ENCODE measurements at regions of chr11 and their contacts with region 1.

Region 1: DNA sequence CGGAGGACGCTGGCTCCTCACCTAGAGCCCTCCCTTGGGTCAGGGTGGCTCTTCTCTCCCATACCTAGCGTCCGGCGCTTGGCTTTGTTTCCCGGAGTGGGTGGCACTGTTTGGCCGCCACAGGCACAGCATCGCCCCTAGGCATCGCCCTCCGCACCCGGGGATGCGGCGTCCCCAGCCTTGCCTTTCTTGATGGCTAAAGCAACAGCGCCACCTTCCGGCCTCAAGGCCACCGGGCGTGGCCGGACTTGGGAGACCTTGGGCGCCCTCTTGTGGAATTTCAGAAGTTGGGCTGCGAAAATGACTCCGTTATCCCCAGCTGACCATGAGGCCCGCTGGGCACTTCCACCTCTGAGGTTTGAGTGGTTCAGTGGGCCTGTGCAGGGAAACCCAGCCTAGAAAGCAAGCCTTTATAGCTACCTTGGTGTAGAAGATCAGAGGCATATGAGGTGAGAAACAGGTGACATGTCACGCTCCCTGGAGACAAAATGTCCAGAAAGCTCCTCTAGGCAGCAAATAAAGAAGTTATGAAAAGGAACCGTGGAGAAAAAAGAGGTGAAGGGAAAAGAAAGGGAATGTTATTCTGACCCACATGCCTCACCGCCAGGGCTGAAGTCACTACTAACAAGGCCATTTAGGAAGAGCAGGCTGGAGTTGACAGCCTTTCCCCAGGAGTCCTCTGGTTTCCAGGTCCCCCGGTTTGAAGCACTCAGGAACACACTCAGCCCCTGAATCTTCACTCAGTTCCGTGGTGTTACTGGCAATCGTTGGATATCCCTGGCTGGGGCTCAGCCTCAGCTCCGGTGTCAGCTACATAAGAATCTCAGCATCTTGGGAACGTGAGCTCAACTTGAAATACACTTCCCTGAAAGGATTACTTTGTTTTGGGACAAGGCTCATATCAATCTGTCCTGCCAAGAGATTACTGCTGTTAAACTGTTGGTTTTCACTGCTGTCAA is 54.1 kb downstream of the SNX19 start:
- DNase-seq: no peak
- ATAC-seq: peak; percentile 96
- H3K4me3 ChIP-seq: no peak overlapping the region
- H3K27ac ChIP-seq: no peak overlapping the region
- H3K4me1 ChIP-seq: no peaks in the 10 kb centered on the region
- H3K27me3 ChIP-seq: no peaks in the 10 kb centered on the region
- CTCF ChIP-seq: peak; percentile 99 to 100 (median 100); a peak in 5 of 6 replicates
- EP300 ChIP-seq: no peak
- POLR2A ChIP-seq: no peak
- RAD21 ChIP-seq: peak; percentile 100

Region 2: GRCh38 chr11:130434521-130435223 is 427.5 kb before region 1 on chr11:
- CTCF ChIA-PET with region 1: interaction called, 295 read pairs
- POLR2A ChIA-PET with region 1: no interaction called
- RAD21 ChIA-PET with region 1: interaction called, 132 read pairs
- SMC1A ChIA-PET with region 1: interaction called, 177 read pairs
- in situ Hi-C with region 1: loop called (anchors 10 kb)
- intact Hi-C with region 1: loop called (anchors 1 kb)
- DNase-seq: peak; percentile 44
- ATAC-seq: peak; percentile 94
- H3K4me3 ChIP-seq: peak overlapping the region; percentile 71
- H3K27ac ChIP-seq: no peak overlapping the region
- H3K4me1 ChIP-seq: no peaks in the 10 kb centered on the region
- H3K27me3 ChIP-seq: peaks cover 3 to 8% of the 10 kb centered on the region in 2 experiments
- CTCF ChIP-seq: peak; percentile 80 to 91 (median 90)
- EP300 ChIP-seq: no peak
- POLR2A ChIP-seq: no peak
- RAD21 ChIP-seq: peak; percentile 75

Region 3: DNA sequence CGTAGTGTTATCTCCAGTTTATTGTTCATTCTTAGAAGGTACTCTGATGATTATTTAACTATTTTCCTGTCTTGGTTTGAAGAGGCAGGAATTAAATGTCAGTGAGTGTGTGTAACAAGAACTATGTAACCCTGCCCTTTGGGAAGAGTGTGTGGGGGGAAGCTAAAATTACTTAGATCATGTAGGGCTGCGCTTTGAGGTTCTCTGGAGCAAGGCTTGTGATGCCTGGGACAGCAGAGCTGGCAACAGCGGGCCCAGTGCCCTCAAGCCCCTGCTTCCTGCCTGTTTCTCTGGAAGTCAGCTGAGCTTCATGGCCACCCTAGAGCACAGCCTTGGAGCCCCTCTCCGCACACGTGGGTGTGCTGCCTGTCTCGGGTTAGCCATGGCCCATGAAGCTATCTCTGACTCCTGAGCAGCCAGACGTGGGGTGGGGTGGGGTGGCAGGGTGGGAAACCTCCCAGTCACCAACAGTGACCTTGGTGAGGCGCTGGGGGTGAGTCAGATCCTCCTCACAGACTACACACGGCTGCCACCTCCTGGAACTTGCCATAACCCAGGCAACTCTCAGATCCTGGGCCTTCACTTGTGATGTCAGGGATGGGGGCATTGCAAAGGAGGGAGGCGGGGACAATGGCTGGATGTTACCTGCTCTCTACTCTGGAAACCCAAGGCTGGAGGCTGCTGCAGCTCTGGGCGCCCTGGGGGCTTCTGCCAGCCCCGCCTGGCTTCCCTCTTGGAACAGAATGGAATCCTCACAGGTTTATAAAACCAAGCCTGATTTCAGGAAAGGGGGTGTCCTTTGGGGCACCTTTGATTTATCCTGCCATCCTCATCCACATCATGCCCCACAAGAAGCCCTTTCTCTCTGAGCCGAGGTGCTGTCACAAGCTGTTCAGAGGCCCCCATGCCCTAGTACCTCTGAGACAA is 34.5 kb before region 1 on chr11:
- CTCF ChIA-PET with region 1: interaction called, 11 read pairs
- POLR2A ChIA-PET with region 1: no interaction called
- RAD21 ChIA-PET with region 1: interaction called, 4 read pairs
- SMC1A ChIA-PET with region 1: interaction called, 9 read pairs
- in situ Hi-C with region 1: no loop called
- intact Hi-C with region 1: no loop called
- DNase-seq: no peak
- ATAC-seq: peak; percentile 73
- H3K4me3 ChIP-seq: no peak overlapping the region
- H3K27ac ChIP-seq: no peak overlapping the region
- H3K4me1 ChIP-seq: no peaks in the 10 kb centered on the region
- H3K27me3 ChIP-seq: peaks cover 0 to 5% of the 10 kb centered on the region in 2 experiments; a peak in 2 of 4 replicates
- CTCF ChIP-seq: peak; percentile 30 to 45 (median 34); a peak in 4 of 6 replicates
- EP300 ChIP-seq: no peak
- POLR2A ChIP-seq: no peak
- RAD21 ChIP-seq: peak; percentile 50

Region 4: DNA sequence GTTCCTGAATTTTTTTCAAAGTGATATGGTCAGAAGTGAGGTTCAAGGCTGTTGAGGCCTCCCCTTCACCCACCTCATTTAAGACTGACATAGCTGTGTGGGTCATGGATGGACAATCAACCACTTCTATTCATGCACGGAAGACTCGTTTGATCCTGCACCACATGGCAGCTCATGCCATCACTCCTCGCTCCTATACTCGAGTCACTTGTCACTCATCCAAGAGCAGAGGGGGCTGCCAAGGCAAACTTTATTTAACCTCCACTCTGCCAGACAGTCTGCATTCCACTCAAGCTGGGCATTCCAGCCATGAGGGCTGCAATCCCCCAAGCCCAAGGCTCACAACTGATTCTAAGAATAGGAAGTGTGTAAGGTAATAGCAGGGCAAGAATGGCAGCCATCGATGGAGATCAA is 20.0 kb after region 1 on chr11:
- CTCF ChIA-PET with region 1: interaction called, 19 read pairs
- POLR2A ChIA-PET with region 1: no interaction called
- RAD21 ChIA-PET with region 1: interaction called, 7 read pairs
- SMC1A ChIA-PET with region 1: interaction called, 4 read pairs
- in situ Hi-C with region 1: no loop called
- intact Hi-C with region 1: no loop called
- DNase-seq: no peak
- ATAC-seq: peak; percentile 28; the same call in 1 of the 3 replicates
- H3K4me3 ChIP-seq: no peak overlapping the region
- H3K27ac ChIP-seq: peak overlapping the region; percentile 8; the same call in 1 of the 2 replicates
- H3K4me1 ChIP-seq: no peaks in the 10 kb centered on the region
- H3K27me3 ChIP-seq: no peaks in the 10 kb centered on the region
- CTCF ChIP-seq: no peak
- EP300 ChIP-seq: no peak
- POLR2A ChIP-seq: no peak
- RAD21 ChIP-seq: no peak